Heart left ventricle (tissue), 16 donors: ENCODE measurements at regions of chr1 and their contacts with region 1.

Region 1: DNA sequence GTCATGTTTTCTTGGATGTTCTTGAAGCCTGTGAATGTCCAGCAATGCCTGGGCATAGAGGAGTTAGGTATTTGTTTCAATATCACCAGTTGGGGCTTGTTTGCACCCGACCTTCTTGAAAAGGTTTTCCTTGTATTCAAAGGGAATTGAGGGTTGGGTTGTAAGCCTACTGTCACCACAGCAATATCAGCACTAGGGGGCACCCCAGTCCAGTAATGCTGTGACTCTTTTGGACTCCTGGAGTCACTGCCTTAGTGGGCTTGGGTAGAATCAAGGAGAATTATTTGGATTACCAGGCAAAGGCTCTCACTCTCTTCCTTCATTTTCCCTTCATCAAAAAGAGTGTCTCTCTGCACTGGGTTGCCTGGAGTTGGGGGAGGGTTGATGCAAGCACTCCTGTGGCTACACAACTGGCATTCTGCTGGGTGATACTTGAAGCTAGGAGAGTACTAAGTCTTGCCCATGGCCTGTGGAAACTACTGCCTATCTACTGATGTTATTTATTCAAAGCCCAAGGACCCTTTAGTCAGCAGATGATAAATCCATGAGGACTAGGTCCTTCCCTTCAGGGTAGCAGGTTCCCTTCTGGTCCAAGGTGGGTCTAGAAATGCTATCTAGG is 34.5 kb downstream of the OR10R2 start:
- DNase-seq: peak in 2 of 5 donors; percentile 12 to 38
- ATAC-seq: no peak
- H3K4me3 ChIP-seq: no peak overlapping the region
- H3K27ac ChIP-seq: no peak overlapping the region
- H3K4me1 ChIP-seq: peaks cover 0 to 12% (median 0%) of the 10 kb centered on the region in 12 donors
- H3K27me3 ChIP-seq: peaks cover 0 to 4% (median 0%) of the 10 kb centered on the region in 9 donors
- CTCF ChIP-seq: peak in 9 of 12 donors; percentile 8 to 53 (median 28)
- POLR2A ChIP-seq: no peak

Region 2: GRCh38 chr1:157963713-157964112 is 542.8 kb before region 1 on chr1:
- intact Hi-C with region 1: loop called in 1 of 10 experiments (anchors 10 kb)
- DNase-seq: peak; percentile 50 to 74 (median 60)
- ATAC-seq: peak; percentile 66 to 84 (median 80)
- H3K4me3 ChIP-seq: no peak overlapping the region
- H3K27ac ChIP-seq: no peak overlapping the region
- H3K4me1 ChIP-seq: peaks cover 0 to 9% (median 5%) of the 10 kb centered on the region in 12 donors
- H3K27me3 ChIP-seq: peaks cover 0 to 31% (median 0%) of the 10 kb centered on the region in 9 donors
- CTCF ChIP-seq: peak; percentile 87 to 97 (median 94)
- POLR2A ChIP-seq: no peak

Region 3: DNA sequence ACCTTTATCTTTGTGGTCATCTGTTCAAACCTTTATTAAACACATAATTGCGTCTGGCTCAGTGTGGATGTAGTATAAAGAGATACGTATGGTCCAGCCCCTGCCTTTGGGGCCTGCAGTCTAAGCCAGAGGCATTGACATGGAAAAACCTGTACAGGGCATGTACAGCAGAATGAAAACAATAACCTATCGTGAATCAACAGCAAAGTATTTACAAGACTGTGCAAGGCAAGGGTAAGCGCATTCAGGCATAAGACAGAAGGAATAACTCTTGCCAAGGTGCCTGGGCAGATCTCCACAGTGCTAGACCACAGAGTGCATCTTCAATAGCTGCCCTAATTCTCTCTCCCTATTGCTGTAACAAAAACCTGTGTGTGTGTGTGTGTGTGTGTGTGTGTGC is 477.5 kb before region 1 on chr1:
- intact Hi-C with region 1: no loop called
- DNase-seq: no peak
- ATAC-seq: no peak
- H3K4me3 ChIP-seq: no peak overlapping the region
- H3K27ac ChIP-seq: no peak overlapping the region
- H3K4me1 ChIP-seq: peaks cover 0 to 35% (median 21%) of the 10 kb centered on the region in 12 donors
- H3K27me3 ChIP-seq: no peaks in the 10 kb centered on the region
- CTCF ChIP-seq: no peak
- POLR2A ChIP-seq: no peak

Region 4: GRCh38 chr1:158649052-158649451 is 142.6 kb after region 1 on chr1:
- intact Hi-C with region 1: loop called in 1 of 10 experiments (anchors 10 kb)
- DNase-seq: no peak
- ATAC-seq: no peak
- H3K4me3 ChIP-seq: no peak overlapping the region
- H3K27ac ChIP-seq: no peak overlapping the region
- H3K4me1 ChIP-seq: peaks cover 0 to 34% (median 0%) of the 10 kb centered on the region in 12 donors
- H3K27me3 ChIP-seq: no peaks in the 10 kb centered on the region
- CTCF ChIP-seq: peak in 2 of 12 donors; percentile 9 to 19
- POLR2A ChIP-seq: no peak

Region 5: GRCh38 chr1:158998781-158999161 is 492.3 kb after region 1 on chr1:
- intact Hi-C with region 1: loop called in 1 of 10 experiments (anchors 2 kb)
- DNase-seq: peak in 3 of 5 donors; percentile 28 to 64 (median 59)
- ATAC-seq: peak; percentile 45 to 57 (median 56)
- H3K4me3 ChIP-seq: peak overlapping the region; percentile 13 to 65 (median 50)
- H3K27ac ChIP-seq: peak overlapping the region; percentile 55 to 93 (median 82)
- H3K4me1 ChIP-seq: peaks cover 0 to 25% (median 4%) of the 10 kb centered on the region in 12 donors
- H3K27me3 ChIP-seq: no peaks in the 10 kb centered on the region
- CTCF ChIP-seq: peak; percentile 84 to 97 (median 92)
- POLR2A ChIP-seq: no peak

Region 6: GRCh38 chr1:159077120-159077961 is 570.9 kb after region 1 on chr1:
- intact Hi-C with region 1: loop called in 3 of 10 experiments (anchors 5 to 10 kb)
- DNase-seq: peak in 2 of 5 donors; percentile 32 to 82
- ATAC-seq: peak in 2 of 4 donors; percentile 24 to 31
- H3K4me3 ChIP-seq: peak overlapping the region in 1 of 12 donors; percentile 50
- H3K27ac ChIP-seq: peak overlapping the region in 1 of 12 donors; percentile 91
- H3K4me1 ChIP-seq: peaks cover 0 to 28% (median 0%) of the 10 kb centered on the region in 12 donors
- H3K27me3 ChIP-seq: no peaks in the 10 kb centered on the region
- CTCF ChIP-seq: no peak
- POLR2A ChIP-seq: no peak